Esophagus squamous epithelium (tissue), 5 donors: ENCODE measurements at regions of chr4 and their contacts with region 1.

Region 1: GRCh38 chr4:143399113-143399949 is 62.7 kb downstream of the GAB1 start:
- DNase-seq: no peak
- H3K4me3 ChIP-seq: no peak overlapping the region
- H3K27ac ChIP-seq: no peak overlapping the region
- H3K4me1 ChIP-seq: peaks cover 0 to 48% (median 8%) of the 10 kb centered on the region in 3 donors
- H3K27me3 ChIP-seq: no peaks in the 10 kb centered on the region
- CTCF ChIP-seq: peak; percentile 32 to 71 (median 48)
- POLR2A ChIP-seq: no peak

Region 2: DNA sequence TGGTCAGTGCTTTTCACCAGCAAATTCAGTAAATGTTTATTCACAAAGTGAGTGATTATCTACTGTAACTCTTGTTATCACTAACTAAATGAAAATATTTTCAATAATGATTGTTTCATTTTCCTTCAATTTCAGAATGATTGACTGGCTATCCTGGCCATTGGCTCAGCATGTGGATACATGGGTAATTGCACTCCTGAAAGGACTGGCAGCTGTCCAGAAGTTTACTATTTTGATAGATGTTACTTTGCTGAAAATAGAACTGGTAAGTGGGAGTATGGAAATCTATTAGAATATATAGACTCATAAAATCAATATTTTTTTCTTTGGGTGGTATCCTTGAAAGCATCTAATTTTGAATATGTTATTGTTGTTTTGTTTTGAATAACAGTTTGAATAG is 203.8 kb before region 1 on chr4:
- intact Hi-C with region 1: no loop called
- DNase-seq: no peak
- H3K4me3 ChIP-seq: no peak overlapping the region
- H3K27ac ChIP-seq: no peak overlapping the region
- H3K4me1 ChIP-seq: peaks cover 0 to 8% (median 0%) of the 10 kb centered on the region in 3 donors
- H3K27me3 ChIP-seq: no peaks in the 10 kb centered on the region
- CTCF ChIP-seq: no peak
- POLR2A ChIP-seq: no peak

Region 3: GRCh38 chr4:143224255-143224654 is 175.1 kb before region 1 on chr4:
- intact Hi-C with region 1: no loop called
- DNase-seq: no peak
- H3K4me3 ChIP-seq: no peak overlapping the region
- H3K27ac ChIP-seq: no peak overlapping the region
- H3K4me1 ChIP-seq: peaks cover 0 to 10% (median 0%) of the 10 kb centered on the region in 3 donors
- H3K27me3 ChIP-seq: no peaks in the 10 kb centered on the region
- CTCF ChIP-seq: no peak
- POLR2A ChIP-seq: no peak

Region 4: GRCh38 chr4:143335979-143336780 is 63.2 kb before region 1 on chr4:
- intact Hi-C with region 1: loop called (anchors 10 kb)
- DNase-seq: peak; percentile 17
- H3K4me3 ChIP-seq: peak overlapping the region; percentile 73 to 92 (median 84)
- H3K27ac ChIP-seq: peak overlapping the region; percentile 93 to 98 (median 96)
- H3K4me1 ChIP-seq: peaks cover 3 to 45% (median 8%) of the 10 kb centered on the region in 3 donors
- H3K27me3 ChIP-seq: no peaks in the 10 kb centered on the region
- CTCF ChIP-seq: no peak
- POLR2A ChIP-seq: peak in 2 of 4 donors; percentile 39 to 62

Region 5: DNA sequence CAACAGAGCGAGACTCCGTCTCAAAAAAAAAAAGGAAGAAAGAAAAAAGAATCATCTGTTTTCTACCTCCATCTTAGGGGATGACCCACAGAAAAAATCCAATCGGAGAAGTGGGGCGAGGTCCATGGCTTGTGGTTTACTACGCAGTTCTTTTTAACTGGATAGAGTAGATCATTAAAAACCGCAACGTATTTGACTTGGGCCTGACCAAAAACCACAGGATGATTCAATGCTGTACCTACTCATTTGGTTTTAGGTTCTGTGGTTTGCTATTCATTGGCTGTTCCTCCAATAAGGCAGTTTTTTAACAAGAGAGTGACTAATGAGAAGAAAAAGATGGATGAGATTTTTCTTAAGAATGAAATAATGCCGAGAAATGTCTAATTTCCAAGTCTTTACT is 217.4 kb after region 1 on chr4:
- intact Hi-C with region 1: no loop called
- DNase-seq: no peak
- H3K4me3 ChIP-seq: no peak overlapping the region
- H3K27ac ChIP-seq: no peak overlapping the region
- H3K4me1 ChIP-seq: no peaks in the 10 kb centered on the region
- H3K27me3 ChIP-seq: no peaks in the 10 kb centered on the region
- CTCF ChIP-seq: no peak
- POLR2A ChIP-seq: no peak

Region 6: DNA sequence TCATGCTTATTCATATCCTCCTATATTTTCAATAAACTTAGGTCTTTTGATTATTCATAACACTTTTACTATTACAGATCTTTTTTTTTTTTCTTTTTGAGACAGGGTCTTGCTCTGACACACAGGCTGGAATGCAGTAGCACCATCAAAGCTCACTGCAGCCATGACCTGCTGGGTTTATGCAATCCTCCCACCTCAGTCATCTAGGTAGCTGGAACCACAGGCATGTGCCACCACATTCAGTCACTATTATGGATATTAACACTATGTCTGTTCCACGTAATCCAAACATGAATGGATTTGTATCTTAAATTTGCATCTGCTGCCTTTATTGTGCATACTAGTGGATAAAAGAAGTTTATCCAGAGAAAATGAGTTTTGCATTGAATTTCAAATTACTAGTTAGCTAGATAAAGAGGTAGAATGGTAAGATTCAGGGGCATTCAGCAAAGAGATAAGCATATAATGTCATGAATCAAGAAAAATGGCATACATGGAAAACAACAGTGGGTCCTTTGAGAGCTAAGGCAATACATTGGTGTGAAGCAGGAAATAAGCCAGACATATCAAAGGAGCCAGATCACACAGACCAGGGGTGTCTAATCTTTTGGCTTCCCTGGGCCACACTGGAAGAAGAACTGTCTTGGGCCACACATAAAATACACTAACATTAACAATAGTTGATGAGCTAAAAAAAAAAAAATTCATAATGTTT is 1684.7 kb after region 1 on chr4:
- intact Hi-C with region 1: no loop called
- DNase-seq: no peak
- H3K4me3 ChIP-seq: no peak overlapping the region
- H3K27ac ChIP-seq: no peak overlapping the region
- H3K4me1 ChIP-seq: no peaks in the 10 kb centered on the region
- H3K27me3 ChIP-seq: no peaks in the 10 kb centered on the region
- CTCF ChIP-seq: no peak
- POLR2A ChIP-seq: no peak